Activated naive CD4-positive, alpha-beta T cell treated with anti-CD3 and anti-CD28 coated beads for 36 hours (primary cell): ENCODE measurements at regions of chr22 and their contacts with region 1.

Region 1: DNA sequence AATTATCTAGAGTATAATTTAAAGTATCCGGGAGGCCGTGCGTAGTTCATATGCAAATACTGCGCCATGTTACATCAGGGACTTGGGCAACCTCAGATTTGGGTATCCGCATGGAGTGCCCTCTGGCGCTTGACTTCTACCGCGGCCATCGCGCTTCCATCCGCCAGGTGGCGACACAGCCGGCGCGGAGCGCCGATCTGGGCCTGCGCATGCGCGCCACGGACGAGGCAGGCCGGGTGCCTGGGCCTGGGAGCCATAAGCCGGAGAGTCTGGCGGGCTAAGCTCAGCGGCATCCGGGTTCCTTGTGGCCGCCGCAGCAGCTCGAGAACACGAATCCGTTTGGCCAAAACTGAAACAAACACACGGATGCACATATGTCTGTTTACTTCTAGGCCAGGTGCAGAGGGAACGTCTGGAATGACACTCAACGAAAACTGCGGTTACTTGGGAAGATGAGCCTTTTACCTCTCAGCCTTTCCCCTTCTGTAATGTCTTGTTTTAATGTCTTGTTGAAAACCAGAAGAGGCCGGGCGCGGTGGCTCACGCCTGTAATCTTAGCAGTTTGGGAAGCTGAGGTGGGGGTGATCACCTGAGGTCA is 21.9 kb downstream of the SNU13 start:
- DNase-seq: peak; percentile 94
- H3K4me3 Mint-ChIP-seq: peak overlapping the region; percentile 81
- H3K27ac Mint-ChIP-seq: peak overlapping the region; percentile 95
- H3K4me1 Mint-ChIP-seq: peaks cover 17% of the 10 kb centered on the region
- H3K27me3 Mint-ChIP-seq: no peaks in the 10 kb centered on the region

Region 2: DNA sequence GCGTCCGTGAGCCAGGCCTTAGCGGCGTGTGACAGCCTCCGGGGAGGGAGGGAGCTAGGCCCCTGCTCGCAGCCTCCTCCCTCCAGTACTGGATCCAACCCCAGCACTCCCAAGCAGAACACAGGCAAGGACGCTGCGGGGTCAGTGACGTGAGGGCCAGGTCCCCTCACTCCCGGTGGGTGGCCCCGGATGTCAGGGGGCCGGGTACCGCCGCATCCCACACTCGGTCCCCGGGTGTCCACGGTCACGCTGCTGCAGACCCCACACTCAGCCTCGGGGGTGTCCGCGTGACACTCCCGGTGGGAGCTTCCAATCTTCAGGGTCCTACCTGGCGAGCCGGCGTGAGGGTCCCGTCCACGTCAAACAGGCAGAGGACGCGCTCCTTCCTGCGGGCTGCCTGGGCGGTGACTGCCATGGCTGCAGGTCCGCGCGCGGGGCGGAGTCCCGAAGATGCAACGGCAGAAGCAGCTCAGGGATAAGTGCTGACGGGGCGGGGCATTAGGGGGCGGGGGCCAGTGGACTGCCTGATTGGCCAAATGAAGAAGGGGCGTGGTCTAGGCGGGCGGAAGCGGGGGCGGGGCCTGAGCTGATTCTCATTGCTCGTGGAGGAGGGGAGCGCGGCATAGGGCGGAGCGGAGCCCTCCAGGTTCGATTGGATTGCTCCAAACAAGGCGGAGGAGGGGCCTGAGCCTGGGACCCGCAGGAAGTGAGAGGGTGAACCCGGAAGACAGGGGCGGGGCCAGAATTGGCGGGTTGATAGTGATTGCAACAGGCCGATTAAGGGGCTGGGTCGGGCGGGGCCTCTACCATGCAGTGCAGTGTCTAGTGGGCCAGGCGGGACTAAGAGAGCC is 77.1 kb before region 1 on chr22 and contains the start of gene PMM1:
- CTCF ChIA-PET with region 1: no interaction called
- intact Hi-C with region 1: loop called (anchors 2 kb)
- DNase-seq: peak; percentile 100
- H3K4me3 Mint-ChIP-seq: peak within 1 kb of the TSS; percentile 93
- H3K27ac Mint-ChIP-seq: peak within 1 kb of the TSS; percentile 84
- H3K4me1 Mint-ChIP-seq: peaks cover 12% of the 10 kb centered on the region
- H3K27me3 Mint-ChIP-seq: no peaks in the 10 kb centered on the region
- total RNA-seq, gene PMM1: 35.3 to 35.6 TPM

Region 3: DNA sequence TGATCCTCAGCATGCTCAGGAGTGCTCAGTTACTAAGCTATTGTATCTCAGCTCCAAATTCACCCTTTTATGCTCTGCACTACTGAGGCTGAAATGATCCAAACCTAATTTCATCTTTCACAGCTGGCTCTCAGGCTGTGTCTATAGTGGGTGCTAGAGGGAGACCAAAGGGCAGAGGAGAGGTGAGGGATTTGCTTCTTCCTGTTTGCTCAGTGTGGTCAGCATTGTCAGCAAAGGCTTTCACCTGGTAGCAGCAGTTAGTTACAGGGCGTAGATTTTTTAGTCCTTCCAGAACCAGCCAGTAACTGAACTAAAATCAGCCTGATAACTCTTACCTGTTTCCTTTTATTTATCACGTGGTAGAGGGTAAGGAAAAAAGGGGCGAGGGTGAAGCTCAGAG is 12.4 kb before region 1 on chr22:
- CTCF ChIA-PET with region 1: interaction called, 17 read pairs
- intact Hi-C with region 1: no loop called
- DNase-seq: no peak
- H3K4me3 Mint-ChIP-seq: no peak overlapping the region
- H3K27ac Mint-ChIP-seq: no peak overlapping the region
- H3K4me1 Mint-ChIP-seq: no peaks in the 10 kb centered on the region
- H3K27me3 Mint-ChIP-seq: no peaks in the 10 kb centered on the region

Region 4: GRCh38 chr22:41682033-41682807 is 15.5 kb after region 1 on chr22:
- CTCF ChIA-PET with region 1: interaction called, 17 read pairs
- intact Hi-C with region 1: loop called (anchors 2 kb)
- DNase-seq: peak; percentile 89
- H3K4me3 Mint-ChIP-seq: peak overlapping the region; percentile 92
- H3K27ac Mint-ChIP-seq: peak overlapping the region; percentile 90
- H3K4me1 Mint-ChIP-seq: peaks cover 43% of the 10 kb centered on the region
- H3K27me3 Mint-ChIP-seq: no peaks in the 10 kb centered on the region

Region 5: DNA sequence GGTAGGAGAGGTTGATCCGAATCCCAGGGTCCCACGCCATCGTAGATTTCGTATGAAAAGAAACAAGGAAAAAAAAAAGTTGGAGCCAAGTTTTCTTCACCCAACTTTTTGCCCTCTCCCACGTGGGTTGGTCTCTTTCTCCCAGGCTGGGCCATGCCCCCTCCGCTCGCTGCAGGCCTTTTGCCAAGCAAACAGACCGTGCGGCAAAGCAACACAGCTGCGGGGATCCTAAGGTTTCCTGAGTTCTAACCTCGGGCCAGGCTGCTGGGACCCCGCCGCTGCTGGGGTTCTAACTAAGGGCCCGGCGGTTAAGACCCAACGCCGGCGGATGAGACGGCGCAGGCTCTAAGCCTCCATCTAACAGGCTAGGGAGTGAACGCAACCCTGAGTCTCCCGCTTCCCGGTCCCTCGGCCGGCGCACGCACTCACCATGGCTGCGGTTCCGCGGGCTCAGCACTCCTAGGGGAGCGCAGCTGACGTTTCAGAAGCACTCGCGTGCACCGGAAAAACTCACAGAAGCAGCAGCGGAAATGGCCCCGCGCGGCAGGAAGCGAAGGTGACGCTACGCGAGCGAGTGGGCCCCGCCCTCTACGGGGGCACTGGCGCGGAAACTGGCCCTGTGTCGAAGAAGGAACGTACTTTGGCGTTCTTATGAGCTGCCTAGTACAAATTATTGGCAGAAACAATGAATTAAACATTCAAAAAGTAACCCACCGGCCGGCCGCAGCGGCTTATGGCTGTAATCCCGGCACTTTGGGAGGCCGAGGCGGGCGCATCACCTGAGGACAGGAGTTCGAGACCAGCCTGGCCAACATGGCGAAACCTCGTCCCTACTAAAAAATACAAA is 21.8 kb after region 1 on chr22 and contains the start of gene SNU13:
- CTCF ChIA-PET with region 1: interaction called, 17 read pairs
- intact Hi-C with region 1: loop called (anchors 2 kb)
- DNase-seq: peak; percentile 96
- H3K4me3 Mint-ChIP-seq: peak within 1 kb of the TSS; percentile 97
- H3K27ac Mint-ChIP-seq: peak within 1 kb of the TSS; percentile 97
- H3K4me1 Mint-ChIP-seq: peaks cover 39% of the 10 kb centered on the region
- H3K27me3 Mint-ChIP-seq: no peaks in the 10 kb centered on the region
- total RNA-seq, gene SNU13: 265 to 277 TPM